Activated CD4-positive, alpha-beta T cell treated with anti-CD3 and anti-CD28 coated beads for 36 hours (primary cell): ENCODE measurements at regions of chr13 and their contacts with region 1.

Region 1: DNA sequence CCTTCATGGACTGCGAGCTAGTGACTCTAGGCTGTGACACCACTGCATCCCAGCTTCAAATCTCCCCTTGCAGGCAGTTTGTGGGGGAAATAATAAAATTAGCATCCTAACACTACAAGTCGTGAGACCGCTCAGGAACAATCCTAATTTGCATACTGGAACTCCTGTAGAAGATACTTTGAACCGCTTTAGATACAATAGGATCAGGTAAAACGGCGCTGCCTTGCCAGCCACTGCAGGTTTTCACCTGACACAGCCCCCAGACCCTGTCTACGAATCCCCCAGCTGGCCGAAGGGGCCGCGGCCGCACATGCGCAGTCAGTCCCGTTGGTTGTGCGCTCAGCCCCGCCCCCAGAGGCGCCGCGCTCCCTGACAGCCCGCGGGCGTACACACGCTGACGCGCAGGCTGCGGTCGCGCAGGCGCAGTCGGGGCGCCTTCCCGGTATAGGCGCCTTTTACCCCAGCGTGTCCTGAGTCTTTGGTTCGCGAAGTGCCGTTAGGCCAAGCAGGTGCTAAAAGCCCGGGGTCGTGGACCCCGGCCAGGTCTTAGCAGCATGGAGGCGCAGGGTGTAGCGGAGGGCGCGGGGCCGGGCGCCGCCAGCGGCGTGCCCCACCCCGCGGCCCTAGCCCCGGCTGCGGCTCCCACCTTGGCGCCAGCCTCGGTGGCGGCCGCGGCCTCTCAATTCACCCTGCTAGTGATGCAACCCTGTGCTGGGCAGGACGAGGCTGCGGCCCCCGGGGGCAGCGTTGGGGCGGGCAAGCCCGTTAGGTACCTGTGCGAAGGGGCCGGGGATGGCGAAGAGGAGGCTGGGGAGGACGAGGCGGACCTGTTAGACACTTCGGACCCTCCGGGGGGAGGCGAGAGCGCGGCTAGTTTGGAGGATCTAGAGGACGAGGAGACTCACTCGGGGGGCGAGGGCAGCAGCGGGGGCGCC is at the start of gene RFXAP:
- DNase-seq: peak; percentile 95
- ATAC-seq: peak; percentile 92
- H3K4me3 Mint-ChIP-seq: peak within 1 kb of the TSS; percentile 85
- H3K27ac Mint-ChIP-seq: peak within 1 kb of the TSS; percentile 90
- H3K4me1 Mint-ChIP-seq: peaks cover 45% of the 10 kb centered on the region
- H3K27me3 Mint-ChIP-seq: peaks cover 8% of the 10 kb centered on the region
- total RNA-seq, gene RFXAP: 10.1 to 13.8 TPM

Region 2: DNA sequence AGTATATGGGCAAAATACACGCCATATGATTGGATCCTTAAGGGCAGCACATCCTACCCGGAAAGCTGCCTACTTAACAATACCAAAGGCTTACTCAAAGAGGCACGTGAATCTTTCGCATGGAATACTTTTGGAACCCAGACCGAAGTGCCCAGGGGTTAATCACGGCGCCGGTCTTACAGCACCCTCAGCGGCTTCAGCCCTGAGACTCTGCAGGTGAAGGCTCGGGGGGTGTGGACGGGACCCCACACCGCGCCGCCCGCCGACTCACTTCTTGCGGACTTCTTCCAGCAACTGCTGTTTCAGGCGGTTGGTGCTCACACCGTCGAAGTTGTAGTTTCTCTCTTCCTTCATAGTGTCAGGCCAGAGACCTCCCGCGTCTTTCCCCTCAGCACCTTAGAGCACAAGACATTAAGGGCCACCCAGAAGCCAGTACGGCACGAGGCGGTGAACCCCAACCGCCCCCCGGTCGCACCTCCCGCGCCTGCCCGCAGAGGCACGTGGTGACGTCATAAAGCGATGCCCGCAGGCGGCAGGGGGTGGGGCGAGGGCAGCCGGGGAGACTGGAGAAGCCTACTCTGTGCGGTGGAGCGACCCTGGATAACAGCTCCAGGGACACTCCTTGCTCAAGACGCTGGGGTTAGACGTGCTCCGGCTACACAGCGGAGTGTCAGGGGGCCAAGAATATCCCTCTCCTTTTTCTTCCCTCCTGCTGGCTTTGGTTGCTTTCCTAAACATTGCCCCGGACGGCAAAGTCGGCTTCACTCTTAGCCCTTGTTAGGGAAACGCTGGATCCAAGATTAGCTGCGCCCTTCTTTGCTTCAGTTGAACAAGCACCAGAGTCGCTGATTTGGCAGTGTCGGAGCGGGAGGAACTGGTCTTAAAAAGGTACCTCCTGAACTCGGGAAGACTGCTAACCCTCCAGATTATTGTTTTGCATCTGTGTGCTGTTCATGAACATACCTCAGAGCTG is 521.4 kb before region 1 on chr13 and contains the start of gene CCDC169:
- CTCF ChIA-PET with region 1: no interaction called
- POLR2A ChIA-PET with region 1: no interaction called
- intact Hi-C with region 1: loop called in 1 of 2 experiments (anchors 5 kb)
- DNase-seq: peak; percentile 80
- ATAC-seq: peak; percentile 87
- H3K4me3 Mint-ChIP-seq: peak within 1 kb of the TSS; percentile 79
- H3K27ac Mint-ChIP-seq: peak within 1 kb of the TSS; percentile 61
- H3K4me1 Mint-ChIP-seq: peaks cover 15% of the 10 kb centered on the region
- H3K27me3 Mint-ChIP-seq: peaks cover 34% of the 10 kb centered on the region
- total RNA-seq, gene CCDC169: 0.30 TPM

Region 3: DNA sequence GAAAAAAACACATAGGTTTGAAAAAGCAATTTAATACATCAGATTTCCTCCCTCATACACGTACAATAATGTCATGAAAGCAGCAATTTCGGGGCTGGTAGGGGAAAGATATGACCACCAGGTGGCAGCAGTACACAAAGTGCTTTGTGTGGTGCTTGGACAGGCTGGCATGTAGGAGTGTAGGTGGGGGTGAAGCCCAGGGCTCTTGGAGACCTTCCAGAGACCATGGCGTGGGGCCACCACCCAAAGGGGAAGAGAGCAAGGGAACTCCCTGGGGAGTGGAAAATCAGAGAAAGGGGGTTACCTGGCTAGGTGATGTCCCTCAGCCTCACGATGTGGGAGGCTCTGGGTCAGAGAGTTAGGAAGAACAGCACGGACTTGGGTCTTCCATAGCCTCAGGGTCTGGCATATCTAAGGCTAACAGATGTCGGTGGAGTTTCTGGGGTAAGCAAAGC is 398.6 kb before region 1 on chr13:
- CTCF ChIA-PET with region 1: no interaction called
- POLR2A ChIA-PET with region 1: no interaction called
- intact Hi-C with region 1: loop called in 1 of 2 experiments (anchors 5 kb)
- DNase-seq: peak; percentile 82
- ATAC-seq: peak; percentile 74
- H3K4me3 Mint-ChIP-seq: no peak overlapping the region
- H3K27ac Mint-ChIP-seq: peak overlapping the region; percentile 75
- H3K4me1 Mint-ChIP-seq: peaks cover 27% of the 10 kb centered on the region
- H3K27me3 Mint-ChIP-seq: peaks cover 48% of the 10 kb centered on the region

Region 4: DNA sequence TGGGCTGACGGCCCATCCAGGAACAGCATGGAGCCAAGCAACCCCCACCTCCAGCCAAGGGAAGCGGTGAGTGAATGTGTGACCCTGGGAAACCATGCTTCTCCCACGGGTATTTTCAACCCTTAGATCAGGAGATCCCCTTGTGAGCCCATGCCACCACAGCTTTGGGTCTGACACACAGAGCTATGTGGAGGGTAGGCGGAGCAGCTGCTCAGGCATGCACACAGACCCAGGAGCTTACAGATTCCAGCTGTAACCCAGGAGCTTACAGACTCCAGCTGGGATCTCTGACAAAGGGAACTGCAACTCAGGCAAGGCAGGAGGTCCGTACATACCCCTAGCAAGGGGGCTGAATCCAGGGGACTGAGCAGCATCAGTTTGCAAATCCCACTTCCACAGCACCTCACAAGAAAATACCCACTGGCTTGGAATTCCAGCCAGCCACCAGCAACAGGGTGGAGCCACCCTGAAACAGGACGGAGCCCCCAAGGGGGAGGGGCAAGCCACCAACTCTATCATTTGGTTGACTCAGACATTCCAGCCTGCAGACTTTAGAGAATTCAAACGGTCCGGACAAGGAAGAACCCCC is 40.9 kb before region 1 on chr13:
- CTCF ChIA-PET with region 1: no interaction called
- POLR2A ChIA-PET with region 1: no interaction called
- intact Hi-C with region 1: no loop called
- DNase-seq: no peak
- ATAC-seq: no peak
- H3K4me3 Mint-ChIP-seq: no peak overlapping the region
- H3K27ac Mint-ChIP-seq: no peak overlapping the region
- H3K4me1 Mint-ChIP-seq: no peaks in the 10 kb centered on the region
- H3K27me3 Mint-ChIP-seq: peaks cover 16% of the 10 kb centered on the region

Region 5: GRCh38 chr13:36834299-36834698 is 15.2 kb after region 1 on chr13:
- CTCF ChIA-PET with region 1: interaction called, 4 read pairs
- POLR2A ChIA-PET with region 1: no interaction called
- intact Hi-C with region 1: loop called in 1 of 2 experiments (anchors 2 kb)
- DNase-seq: no peak
- ATAC-seq: peak; percentile 98
- H3K4me3 Mint-ChIP-seq: no peak overlapping the region
- H3K27ac Mint-ChIP-seq: no peak overlapping the region
- H3K4me1 Mint-ChIP-seq: peaks cover 5% of the 10 kb centered on the region
- H3K27me3 Mint-ChIP-seq: no peaks in the 10 kb centered on the region

Region 6: DNA sequence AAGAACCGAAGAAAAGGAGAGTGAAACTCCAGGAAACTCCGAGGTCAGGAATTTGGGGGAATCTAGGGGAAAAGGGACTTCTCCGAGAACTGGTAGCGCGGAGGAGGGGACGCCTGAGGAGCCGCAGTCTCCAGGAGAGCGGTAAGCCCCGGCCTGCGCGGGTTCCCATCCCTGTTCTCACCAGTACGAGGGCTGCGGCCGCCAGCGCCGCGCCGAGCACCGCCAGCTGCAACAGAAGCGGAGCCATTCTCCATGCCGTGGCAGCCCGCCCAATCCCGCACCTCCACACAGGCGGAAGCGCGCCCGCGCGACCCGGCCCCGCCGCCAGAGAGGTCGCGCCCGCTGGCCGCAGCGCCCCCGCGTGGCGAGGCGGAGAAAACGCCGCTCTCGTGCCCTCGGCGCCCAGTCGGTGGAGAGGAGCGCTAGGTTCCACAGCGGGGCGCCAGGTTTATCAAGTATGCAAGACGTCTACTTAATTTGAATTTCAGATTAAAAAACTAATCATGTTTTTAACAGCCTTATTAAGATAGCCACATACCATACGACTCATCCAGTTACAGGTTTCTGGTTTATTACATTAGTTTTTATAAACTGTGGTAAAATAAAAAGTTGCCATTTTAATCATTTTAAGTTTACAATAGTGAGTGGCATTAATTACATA is 180.1 kb after region 1 on chr13 and contains the start of gene ALG5:
- CTCF ChIA-PET with region 1: no interaction called
- POLR2A ChIA-PET with region 1: no interaction called
- intact Hi-C with region 1: loop called (anchors 1 to 2 kb)
- DNase-seq: peak; percentile 94
- ATAC-seq: peak; percentile 66
- H3K4me3 Mint-ChIP-seq: peak within 1 kb of the TSS; percentile 97
- H3K27ac Mint-ChIP-seq: peak within 1 kb of the TSS; percentile 100
- H3K4me1 Mint-ChIP-seq: peaks cover 29% of the 10 kb centered on the region
- H3K27me3 Mint-ChIP-seq: no peaks in the 10 kb centered on the region
- total RNA-seq, gene ALG5: 21.1 to 28.3 TPM

Region 7: GRCh38 chr13:38349390-38350113 is 1530.5 kb after region 1 on chr13 and contains the start of gene UFM1:
- CTCF ChIA-PET with region 1: no interaction called
- POLR2A ChIA-PET with region 1: no interaction called
- intact Hi-C with region 1: loop called in 1 of 2 experiments (anchors 5 kb)
- DNase-seq: peak; percentile 92
- ATAC-seq: peak; percentile 93
- H3K4me3 Mint-ChIP-seq: peak within 1 kb of the TSS; percentile 98
- H3K27ac Mint-ChIP-seq: peak within 1 kb of the TSS; percentile 99
- H3K4me1 Mint-ChIP-seq: peaks cover 35% of the 10 kb centered on the region
- H3K27me3 Mint-ChIP-seq: no peaks in the 10 kb centered on the region
- total RNA-seq, gene UFM1: 36.7 to 44.8 TPM